Activated B cell treated with CpG ODN at 0.5 μM for 24 hours (primary cell): ENCODE measurements at regions of chr11 and their contacts with region 1.

Region 1: GRCh38 chr11:128610721-128611617 is 23.6 kb upstream of the ETS1 start:
- DNase-seq: peak; percentile 79
- ATAC-seq: peak; percentile 87
- H3K4me3 Mint-ChIP-seq: peak overlapping the region; percentile 79
- H3K27ac Mint-ChIP-seq: peak overlapping the region; percentile 94
- H3K4me1 Mint-ChIP-seq: peaks cover 93% of the 10 kb centered on the region
- H3K27me3 Mint-ChIP-seq: no peaks in the 10 kb centered on the region
- CTCF ChIP-seq: no peak

Region 2: GRCh38 chr11:128302425-128303186 is 308.4 kb before region 1 on chr11:
- CTCF ChIA-PET with region 1: no interaction called
- POLR2A ChIA-PET with region 1: no interaction called
- intact Hi-C with region 1: no loop called
- DNase-seq: no peak
- ATAC-seq: peak; percentile 89
- H3K4me3 Mint-ChIP-seq: peak overlapping the region; percentile 21
- H3K27ac Mint-ChIP-seq: peak overlapping the region; percentile 81
- H3K4me1 Mint-ChIP-seq: peaks cover 73% of the 10 kb centered on the region
- H3K27me3 Mint-ChIP-seq: no peaks in the 10 kb centered on the region
- CTCF ChIP-seq: no peak

Region 3: GRCh38 chr11:128482512-128483191 is 128.3 kb before region 1 on chr11:
- CTCF ChIA-PET with region 1: no interaction called
- POLR2A ChIA-PET with region 1: interaction called, 12 read pairs
- intact Hi-C with region 1: no loop called
- DNase-seq: no peak
- ATAC-seq: peak; percentile 18
- H3K4me3 Mint-ChIP-seq: peak overlapping the region; percentile 67
- H3K27ac Mint-ChIP-seq: peak overlapping the region; percentile 89
- H3K4me1 Mint-ChIP-seq: peaks cover 95% of the 10 kb centered on the region
- H3K27me3 Mint-ChIP-seq: no peaks in the 10 kb centered on the region
- CTCF ChIP-seq: no peak

Region 4: DNA sequence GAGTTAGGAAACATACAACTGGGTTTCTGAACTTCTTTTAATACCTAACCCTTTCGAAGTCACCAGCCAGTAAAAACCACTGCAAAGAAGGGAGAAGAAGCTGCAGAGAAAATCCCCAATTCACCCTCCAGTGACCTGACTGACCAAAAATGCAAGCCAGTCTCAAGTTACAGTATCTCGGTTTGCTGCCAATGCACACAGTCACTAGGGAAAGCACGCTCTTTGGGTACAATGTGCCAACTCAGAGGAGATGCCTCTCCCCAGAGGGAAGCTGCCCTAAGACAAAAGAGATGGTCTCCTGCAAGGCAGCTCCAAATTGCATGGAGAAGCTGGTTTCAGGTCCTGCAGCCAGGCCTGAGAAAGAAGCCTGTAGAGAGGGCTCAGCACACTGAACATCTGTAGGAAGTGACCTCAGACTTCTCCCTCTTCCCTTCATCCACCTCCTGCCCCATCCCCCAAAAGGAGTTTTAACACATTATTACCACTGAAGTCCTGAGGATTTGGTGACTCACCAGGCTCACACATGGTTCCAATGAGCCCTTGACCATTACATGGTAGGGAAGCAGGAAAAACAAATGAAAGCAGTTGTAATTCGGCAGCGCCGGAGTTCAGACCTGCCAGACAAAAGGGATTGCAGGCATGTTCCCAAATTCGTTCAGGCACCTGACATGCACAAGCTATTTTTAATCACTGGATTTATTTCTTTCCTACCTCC is 113.8 kb before region 1 on chr11:
- CTCF ChIA-PET with region 1: no interaction called
- POLR2A ChIA-PET with region 1: interaction called, 11 read pairs
- intact Hi-C with region 1: no loop called
- DNase-seq: peak; percentile 43
- ATAC-seq: peak; percentile 92
- H3K4me3 Mint-ChIP-seq: peak overlapping the region; percentile 78
- H3K27ac Mint-ChIP-seq: peak overlapping the region; percentile 93
- H3K4me1 Mint-ChIP-seq: peaks cover 98% of the 10 kb centered on the region
- H3K27me3 Mint-ChIP-seq: no peaks in the 10 kb centered on the region
- CTCF ChIP-seq: no peak

Region 5: DNA sequence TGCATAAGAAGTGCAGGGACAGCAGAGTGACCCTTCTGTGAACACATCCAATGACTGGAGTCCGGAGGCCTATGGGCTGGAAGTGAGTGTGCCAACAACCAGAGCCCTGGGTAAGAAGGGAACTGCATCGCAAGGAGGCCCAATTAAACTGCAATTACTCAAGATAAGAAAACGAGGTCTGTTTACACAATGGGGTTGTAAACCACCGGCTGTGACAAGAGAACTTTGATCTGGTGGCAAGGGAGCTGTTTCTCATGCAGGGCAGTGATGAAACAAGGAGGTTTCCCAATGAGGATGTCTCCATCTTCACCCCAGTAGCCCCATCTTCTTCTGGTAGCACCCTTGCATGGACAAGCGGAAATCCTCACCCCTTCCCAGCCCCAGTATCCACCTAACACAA is 45.1 kb before region 1 on chr11:
- CTCF ChIA-PET with region 1: interaction called, 3 read pairs
- POLR2A ChIA-PET with region 1: interaction called, 51 read pairs
- intact Hi-C with region 1: loop called (anchors 1 kb)
- DNase-seq: no peak
- ATAC-seq: no peak
- H3K4me3 Mint-ChIP-seq: no peak overlapping the region
- H3K27ac Mint-ChIP-seq: peak overlapping the region; percentile 68
- H3K4me1 Mint-ChIP-seq: peaks cover 76% of the 10 kb centered on the region
- H3K27me3 Mint-ChIP-seq: no peaks in the 10 kb centered on the region
- CTCF ChIP-seq: no peak

Region 6: GRCh38 chr11:128595221-128595620 is 15.7 kb before region 1 on chr11:
- CTCF ChIA-PET with region 1: interaction called, 3 read pairs
- POLR2A ChIA-PET with region 1: interaction called, 48 read pairs
- intact Hi-C with region 1: loop called (anchors 1 kb)
- DNase-seq: no peak
- ATAC-seq: no peak
- H3K4me3 Mint-ChIP-seq: no peak overlapping the region
- H3K27ac Mint-ChIP-seq: peak overlapping the region; percentile 75
- H3K4me1 Mint-ChIP-seq: peaks cover 52% of the 10 kb centered on the region
- H3K27me3 Mint-ChIP-seq: no peaks in the 10 kb centered on the region
- CTCF ChIP-seq: no peak

Region 7: DNA sequence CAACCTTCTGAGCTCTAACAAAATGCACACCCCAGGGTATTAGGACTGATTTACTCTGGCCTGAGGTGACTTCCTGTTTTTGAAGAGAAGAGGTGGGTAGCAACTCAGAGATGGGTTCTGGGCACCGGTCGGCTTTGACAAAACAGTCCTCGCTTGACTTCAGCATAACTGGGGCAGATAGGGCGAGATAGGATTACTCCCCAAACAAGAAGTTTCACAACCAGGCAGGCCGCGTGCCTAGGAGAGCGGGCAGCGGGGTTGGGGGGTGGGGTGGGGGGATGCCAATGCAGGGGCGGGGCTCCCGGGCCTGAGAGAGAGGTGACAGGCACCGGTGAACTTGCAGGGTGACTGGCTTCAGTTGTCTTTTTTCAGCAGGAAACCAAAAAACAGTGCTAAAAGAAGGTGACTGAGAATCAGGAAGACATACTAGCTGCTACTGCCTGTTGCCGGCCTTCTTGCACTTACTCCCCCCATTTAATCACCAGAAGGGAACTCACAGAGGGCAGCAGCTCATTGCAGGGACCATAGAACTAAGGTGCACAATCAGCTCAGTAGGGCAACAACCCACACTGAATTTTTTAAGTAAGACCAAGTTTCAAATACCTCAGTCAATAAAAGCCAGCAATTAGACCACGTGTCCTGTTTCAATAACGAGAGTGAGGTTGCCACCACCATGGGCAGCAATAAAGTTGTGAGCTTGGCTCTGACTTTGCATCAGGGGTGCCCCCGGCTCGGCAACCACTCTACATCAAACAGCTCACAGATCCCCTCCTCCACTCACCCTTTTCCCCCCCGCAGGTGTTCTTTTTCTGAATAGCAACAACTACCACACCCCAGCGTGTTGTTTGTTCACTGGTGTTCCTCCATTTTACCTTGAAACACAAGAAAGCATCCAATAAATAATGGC is 13.6 kb after region 1 on chr11:
- CTCF ChIA-PET with region 1: interaction called, 284 read pairs
- POLR2A ChIA-PET with region 1: interaction called, 574 read pairs
- intact Hi-C with region 1: loop called (anchors 1 kb)
- DNase-seq: peak; percentile 64
- ATAC-seq: peak; percentile 82
- H3K4me3 Mint-ChIP-seq: peak overlapping the region; percentile 74
- H3K27ac Mint-ChIP-seq: peak overlapping the region; percentile 99
- H3K4me1 Mint-ChIP-seq: peaks cover 99% of the 10 kb centered on the region
- H3K27me3 Mint-ChIP-seq: no peaks in the 10 kb centered on the region
- CTCF ChIP-seq: no peak

Region 8: GRCh38 chr11:128804481-128804880 is 193.5 kb after region 1 on chr11:
- CTCF ChIA-PET with region 1: no interaction called
- POLR2A ChIA-PET with region 1: no interaction called
- intact Hi-C with region 1: no loop called
- DNase-seq: no peak
- ATAC-seq: no peak
- H3K4me3 Mint-ChIP-seq: no peak overlapping the region
- H3K27ac Mint-ChIP-seq: peak overlapping the region; percentile 26
- H3K4me1 Mint-ChIP-seq: peaks cover 22% of the 10 kb centered on the region
- H3K27me3 Mint-ChIP-seq: no peaks in the 10 kb centered on the region
- CTCF ChIP-seq: no peak

Region 9: GRCh38 chr11:128841461-128842072 is 230.6 kb after region 1 on chr11:
- CTCF ChIA-PET with region 1: interaction called, 4 read pairs
- POLR2A ChIA-PET with region 1: interaction called, 5 read pairs
- intact Hi-C with region 1: loop called (anchors 5 kb)
- DNase-seq: no peak
- ATAC-seq: peak; percentile 77
- H3K4me3 Mint-ChIP-seq: peak overlapping the region; percentile 36
- H3K27ac Mint-ChIP-seq: peak overlapping the region; percentile 86
- H3K4me1 Mint-ChIP-seq: peaks cover 100% of the 10 kb centered on the region
- H3K27me3 Mint-ChIP-seq: no peaks in the 10 kb centered on the region
- CTCF ChIP-seq: no peak